ENCODE measurements at regions of chr3 and their contacts with region 1.

Region 1: DNA sequence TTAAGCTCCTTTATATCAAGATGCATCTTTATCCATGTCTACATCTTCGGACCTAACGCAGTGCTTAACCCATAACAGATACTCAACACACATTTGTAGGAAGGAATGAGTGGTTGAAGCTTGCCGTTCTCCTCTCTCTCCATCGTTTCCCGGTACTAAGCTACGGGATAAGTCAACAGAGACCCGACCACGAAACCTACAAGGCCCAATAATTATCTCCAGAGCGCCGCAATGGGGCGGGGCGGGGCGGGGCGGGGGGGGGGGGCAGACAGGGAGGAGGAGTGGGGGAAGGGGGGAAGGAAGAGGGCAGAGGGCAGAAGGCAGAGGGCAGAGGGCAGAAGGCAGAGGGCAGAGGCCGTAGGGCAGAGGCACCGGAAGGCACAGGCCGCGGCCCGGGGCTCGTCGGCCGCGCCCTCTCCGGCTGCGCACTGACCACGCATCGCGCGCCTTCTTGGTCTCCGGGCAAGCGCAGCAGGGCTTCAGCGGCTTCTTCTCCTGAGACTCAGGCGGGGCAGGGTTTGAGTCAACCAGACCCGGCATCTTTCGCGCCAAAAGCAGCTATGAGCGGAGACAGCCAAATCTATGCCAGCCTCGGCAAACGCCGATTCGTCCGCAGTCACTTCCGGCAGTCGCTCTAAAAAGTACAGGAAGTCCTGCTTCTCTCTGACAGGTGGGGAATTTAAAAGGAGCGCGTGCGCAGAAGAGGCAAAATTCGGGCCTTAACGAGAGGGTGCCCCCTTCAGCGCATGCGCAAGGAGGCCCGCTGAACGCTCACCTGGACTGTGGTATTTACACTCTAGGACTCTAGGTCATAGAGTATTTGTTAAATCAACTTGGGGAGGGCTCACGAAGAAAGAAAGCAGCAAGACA is at the start of gene COX17:
- DNase-seq: peak; percentile 96
- H3K4me3 Mint-ChIP-seq: peak within 1 kb of the TSS; percentile 96
- H3K27ac Mint-ChIP-seq: peak within 1 kb of the TSS; percentile 94
- H3K4me1 Mint-ChIP-seq: peaks cover 36% of the 10 kb centered on the region
- H3K27me3 Mint-ChIP-seq: no peaks in the 10 kb centered on the region
- total RNA-seq, gene COX17: 61.2 and 64.9 TPM in 2 replicates

Region 2: GRCh38 chr3:118884748-118885206 is 792.2 kb before region 1 on chr3:
- intact Hi-C with region 1: loop called (anchors 1 kb)
- DNase-seq: peak; percentile 52
- H3K4me3 Mint-ChIP-seq: no peak overlapping the region
- H3K27ac Mint-ChIP-seq: no peak overlapping the region
- H3K4me1 Mint-ChIP-seq: no peaks in the 10 kb centered on the region
- H3K27me3 Mint-ChIP-seq: peaks cover 16% of the 10 kb centered on the region

Region 3: DNA sequence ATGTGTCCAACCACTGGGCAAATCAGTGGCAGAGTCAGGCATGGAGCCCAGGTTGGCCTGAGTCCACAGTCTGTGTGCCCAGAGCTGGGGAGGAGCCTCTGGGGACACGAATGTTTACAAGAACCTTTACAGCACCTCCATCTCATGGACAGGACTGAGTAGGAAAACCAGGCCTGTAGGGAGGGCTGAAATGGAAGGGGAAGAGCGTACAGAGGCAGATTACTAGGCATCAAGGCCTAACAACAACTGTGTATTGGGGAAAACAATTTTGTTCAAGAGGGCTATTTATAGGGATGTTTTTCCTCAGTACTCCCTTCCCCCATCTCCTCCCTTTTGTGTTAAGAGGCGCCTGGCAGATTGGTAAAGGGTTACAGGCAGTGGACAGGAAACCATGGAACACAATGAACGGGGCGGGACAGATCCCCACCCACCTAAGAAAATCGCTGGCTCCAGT is 397.9 kb before region 1 on chr3:
- intact Hi-C with region 1: loop called (anchors 5 kb)
- DNase-seq: no peak
- H3K4me3 Mint-ChIP-seq: no peak overlapping the region
- H3K27ac Mint-ChIP-seq: no peak overlapping the region
- H3K4me1 Mint-ChIP-seq: peaks cover 7% of the 10 kb centered on the region
- H3K27me3 Mint-ChIP-seq: peaks cover 1% of the 10 kb centered on the region

Region 4: DNA sequence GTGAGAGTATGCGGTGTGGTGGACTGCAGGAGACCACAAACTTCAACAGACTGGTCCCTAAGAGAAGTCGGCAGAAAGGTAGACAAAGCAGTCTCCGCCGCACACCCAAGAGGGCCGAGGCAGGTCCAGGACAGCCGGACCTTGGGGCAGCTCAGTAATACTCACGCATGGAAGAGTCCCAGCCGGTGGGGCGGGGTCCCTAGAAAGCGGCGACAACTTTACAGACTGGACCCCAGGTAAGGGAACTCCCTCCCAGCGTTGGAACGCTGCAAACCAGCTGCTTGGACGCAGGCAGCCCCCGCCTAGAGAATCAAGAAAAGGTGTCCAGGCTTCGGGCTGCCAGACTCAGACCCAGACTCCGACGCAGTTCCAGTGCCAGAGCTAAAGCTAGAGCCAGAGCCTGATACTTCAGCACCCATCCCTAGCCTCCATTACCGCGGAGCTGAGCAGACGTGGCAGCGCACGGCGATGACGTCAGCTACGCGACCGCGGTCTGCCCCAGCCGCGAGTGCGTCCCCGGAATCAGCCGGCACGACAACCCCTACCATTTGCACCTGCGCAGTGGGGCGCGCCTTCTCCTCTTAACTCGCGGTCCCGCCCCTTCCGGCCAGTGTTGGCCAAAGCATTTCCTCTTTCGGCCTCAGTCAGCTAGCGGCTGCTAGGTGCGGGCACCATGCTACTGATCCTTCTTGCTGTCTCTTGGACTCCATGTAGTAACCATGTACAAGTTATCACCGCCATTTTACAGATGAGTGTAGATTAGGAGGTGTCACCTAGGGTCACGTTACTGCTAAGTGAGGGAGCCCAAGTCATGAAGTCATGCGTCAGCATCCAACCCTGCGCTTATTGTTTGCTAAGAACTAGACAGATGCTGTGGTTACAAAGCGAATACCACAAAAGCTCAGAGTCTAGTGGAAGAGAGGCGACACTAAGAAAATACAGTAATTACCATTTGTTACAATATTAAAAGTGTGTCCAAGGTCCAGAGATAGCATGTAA is 213.5 kb before region 1 on chr3 and contains the start of gene TMEM39A:
- intact Hi-C with region 1: loop called (anchors 1 kb)
- DNase-seq: peak; percentile 98
- H3K4me3 Mint-ChIP-seq: peak within 1 kb of the TSS; percentile 95
- H3K27ac Mint-ChIP-seq: peak within 1 kb of the TSS; percentile 97
- H3K4me1 Mint-ChIP-seq: peaks cover 38% of the 10 kb centered on the region
- H3K27me3 Mint-ChIP-seq: no peaks in the 10 kb centered on the region
- total RNA-seq, gene TMEM39A: 50.4 and 58.4 TPM in 2 replicates

Region 5: DNA sequence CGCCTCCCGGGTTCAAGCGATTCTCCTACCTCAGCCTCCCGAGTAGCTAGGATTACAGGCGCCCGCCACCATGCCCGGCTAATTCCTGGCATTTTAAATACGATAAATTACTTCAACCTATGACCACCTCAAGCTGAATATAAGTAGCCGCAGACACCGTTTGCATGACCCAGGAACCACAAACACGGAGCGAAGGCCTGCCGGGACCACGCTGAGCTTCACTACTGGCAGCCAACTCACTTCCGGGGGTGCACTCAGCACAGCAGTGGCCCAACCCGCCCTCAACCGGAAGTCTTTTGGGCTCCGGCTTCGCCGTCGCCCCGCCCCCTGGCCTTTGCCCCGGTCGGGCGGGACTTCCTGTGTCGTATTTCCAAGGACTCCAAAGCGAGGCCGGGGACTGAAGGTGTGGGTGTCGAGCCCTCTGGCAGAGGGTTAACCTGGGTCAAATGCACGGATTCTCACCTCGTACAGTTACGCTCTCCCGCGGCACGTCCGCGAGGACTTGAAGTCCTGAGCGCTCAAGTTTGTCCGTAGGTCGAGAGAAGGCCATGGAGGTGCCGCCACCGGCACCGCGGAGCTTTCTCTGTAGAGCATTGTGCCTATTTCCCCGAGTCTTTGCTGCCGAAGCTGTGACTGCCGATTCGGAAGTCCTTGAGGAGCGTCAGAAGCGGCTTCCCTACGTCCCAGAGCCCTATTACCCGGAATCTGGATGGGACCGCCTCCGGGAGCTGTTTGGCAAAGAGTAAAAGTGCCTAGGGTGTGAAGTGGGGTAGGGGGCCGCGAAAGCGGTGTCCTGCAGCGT is 178.6 kb before region 1 on chr3 and contains the start of gene TIMMDC1:
- intact Hi-C with region 1: loop called (anchors 1 kb)
- DNase-seq: peak; percentile 96
- H3K4me3 Mint-ChIP-seq: peak within 1 kb of the TSS; percentile 96
- H3K27ac Mint-ChIP-seq: peak within 1 kb of the TSS; percentile 95
- H3K4me1 Mint-ChIP-seq: peaks cover 32% of the 10 kb centered on the region
- H3K27me3 Mint-ChIP-seq: no peaks in the 10 kb centered on the region
- total RNA-seq, gene TIMMDC1: 93.6 and 101 TPM in 2 replicates

Region 6: DNA sequence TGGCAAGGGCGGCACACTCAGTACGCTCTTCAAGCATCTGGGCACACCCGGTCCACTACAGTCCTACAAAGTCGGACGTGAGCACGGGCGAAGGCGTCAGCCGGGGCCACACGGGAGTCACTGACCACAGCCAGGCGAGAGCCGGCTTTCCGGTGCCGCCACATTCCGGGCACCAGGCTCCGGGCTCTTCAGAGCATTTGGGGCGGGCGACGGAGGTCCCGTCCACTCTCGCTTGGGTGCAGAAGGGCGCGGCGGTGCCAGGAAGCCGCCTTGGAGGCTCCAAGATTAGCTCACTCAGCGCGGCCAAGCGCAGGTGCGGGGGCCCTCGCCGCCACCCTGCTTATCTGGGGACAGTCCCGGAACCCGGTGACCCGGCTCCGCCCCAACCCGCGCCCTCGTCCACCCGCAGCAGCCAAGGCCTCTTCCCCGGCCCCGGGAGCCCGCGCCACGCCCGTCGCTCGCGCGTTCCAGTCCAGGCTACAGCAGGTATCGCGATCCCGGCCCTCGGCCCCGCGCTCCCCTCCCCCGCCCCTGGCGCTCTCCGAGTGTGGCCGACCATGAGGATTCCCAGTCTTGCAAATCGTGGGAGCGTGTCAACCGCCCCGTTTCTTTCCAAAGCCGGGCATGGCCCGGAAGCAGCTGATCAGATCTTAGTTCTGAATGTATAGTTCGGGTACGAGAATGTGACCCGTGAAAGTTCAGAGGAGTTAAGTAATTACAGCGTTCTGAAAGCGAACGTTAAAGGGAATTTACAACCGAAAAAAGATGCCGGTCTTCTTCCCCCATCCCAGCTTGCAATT is 97.4 kb before region 1 on chr3 and contains the start of gene ADPRH:
- intact Hi-C with region 1: loop called (anchors 5 kb)
- DNase-seq: peak; percentile 44
- H3K4me3 Mint-ChIP-seq: peak within 1 kb of the TSS; percentile 84
- H3K27ac Mint-ChIP-seq: peak within 1 kb of the TSS; percentile 85
- H3K4me1 Mint-ChIP-seq: peaks cover 25% of the 10 kb centered on the region
- H3K27me3 Mint-ChIP-seq: no peaks in the 10 kb centered on the region
- total RNA-seq, gene ADPRH: 5.5 and 6.3 TPM in 2 replicates

Region 7: GRCh38 chr3:119702530-119703157 is 25.6 kb after region 1 on chr3 and contains the start of gene CFAP91:
- intact Hi-C with region 1: loop called (anchors 1 kb)
- DNase-seq: peak; percentile 74
- H3K4me3 Mint-ChIP-seq: peak within 1 kb of the TSS; percentile 71
- H3K27ac Mint-ChIP-seq: no peak within 1 kb of the TSS
- H3K4me1 Mint-ChIP-seq: peaks cover 29% of the 10 kb centered on the region
- H3K27me3 Mint-ChIP-seq: peaks cover 26% of the 10 kb centered on the region
- total RNA-seq, gene CFAP91: not detected in 2 replicates